Breast epithelium (tissue), 4 donors: ENCODE measurements at regions of chr11 and their contacts with region 1.

Region 1: GRCh38 chr11:121282886-121283502 is 9.6 kb upstream of the SC5D start:
- DNase-seq: no peak
- H3K4me3 ChIP-seq: no peak overlapping the region
- H3K27ac ChIP-seq: no peak overlapping the region
- H3K4me1 ChIP-seq: no peaks in the 10 kb centered on the region
- H3K27me3 ChIP-seq: no peaks in the 10 kb centered on the region
- CTCF ChIP-seq: no peak
- POLR2A ChIP-seq: no peak

Region 2: DNA sequence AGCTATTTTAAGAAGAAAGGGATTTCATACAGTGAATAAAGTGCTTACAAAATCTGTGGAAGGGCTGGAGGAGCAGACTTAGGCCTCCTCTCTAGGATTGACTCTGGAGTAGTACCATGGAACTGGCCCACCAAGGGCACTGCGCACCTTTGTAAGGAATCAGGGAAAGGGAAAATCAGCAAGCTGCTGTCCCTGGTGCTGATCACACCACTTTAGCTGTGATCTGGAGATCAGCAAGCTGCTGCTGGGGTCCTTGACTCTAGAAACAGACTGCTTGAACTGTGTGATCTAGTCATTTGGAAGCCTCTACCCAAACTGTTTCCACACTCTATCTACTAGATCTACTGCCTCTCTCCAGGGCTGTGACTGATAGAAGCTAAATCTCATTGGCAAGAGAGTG is 200.3 kb before region 1 on chr11:
- intact Hi-C with region 1: no loop called
- DNase-seq: no peak
- H3K4me3 ChIP-seq: no peak overlapping the region
- H3K27ac ChIP-seq: no peak overlapping the region
- H3K4me1 ChIP-seq: no peaks in the 10 kb centered on the region
- H3K27me3 ChIP-seq: no peaks in the 10 kb centered on the region
- CTCF ChIP-seq: no peak
- POLR2A ChIP-seq: no peak

Region 3: GRCh38 chr11:121226415-121227263 is 56.4 kb before region 1 on chr11:
- intact Hi-C with region 1: no loop called
- DNase-seq: no peak
- H3K4me3 ChIP-seq: no peak overlapping the region
- H3K27ac ChIP-seq: no peak overlapping the region
- H3K4me1 ChIP-seq: no peaks in the 10 kb centered on the region
- H3K27me3 ChIP-seq: no peaks in the 10 kb centered on the region
- CTCF ChIP-seq: no peak
- POLR2A ChIP-seq: no peak

Region 4: GRCh38 chr11:121321614-121322243 is 38.7 kb after region 1 on chr11:
- intact Hi-C with region 1: loop called (anchors 2 kb)
- DNase-seq: peak in 1 of 2 donors; percentile 25
- H3K4me3 ChIP-seq: no peak overlapping the region
- H3K27ac ChIP-seq: no peak overlapping the region
- H3K4me1 ChIP-seq: no peaks in the 10 kb centered on the region
- H3K27me3 ChIP-seq: no peaks in the 10 kb centered on the region
- CTCF ChIP-seq: peak in 2 of 3 donors; percentile 23 to 45
- POLR2A ChIP-seq: no peak

Region 5: GRCh38 chr11:122814401-122814800 is 1531.4 kb after region 1 on chr11:
- intact Hi-C with region 1: no loop called
- DNase-seq: no peak
- H3K4me3 ChIP-seq: no peak overlapping the region
- H3K27ac ChIP-seq: no peak overlapping the region
- H3K4me1 ChIP-seq: no peaks in the 10 kb centered on the region
- H3K27me3 ChIP-seq: no peaks in the 10 kb centered on the region
- CTCF ChIP-seq: no peak
- POLR2A ChIP-seq: no peak